ENCODE measurements at regions of chr4 and their contacts with region 1.

Region 1: DNA sequence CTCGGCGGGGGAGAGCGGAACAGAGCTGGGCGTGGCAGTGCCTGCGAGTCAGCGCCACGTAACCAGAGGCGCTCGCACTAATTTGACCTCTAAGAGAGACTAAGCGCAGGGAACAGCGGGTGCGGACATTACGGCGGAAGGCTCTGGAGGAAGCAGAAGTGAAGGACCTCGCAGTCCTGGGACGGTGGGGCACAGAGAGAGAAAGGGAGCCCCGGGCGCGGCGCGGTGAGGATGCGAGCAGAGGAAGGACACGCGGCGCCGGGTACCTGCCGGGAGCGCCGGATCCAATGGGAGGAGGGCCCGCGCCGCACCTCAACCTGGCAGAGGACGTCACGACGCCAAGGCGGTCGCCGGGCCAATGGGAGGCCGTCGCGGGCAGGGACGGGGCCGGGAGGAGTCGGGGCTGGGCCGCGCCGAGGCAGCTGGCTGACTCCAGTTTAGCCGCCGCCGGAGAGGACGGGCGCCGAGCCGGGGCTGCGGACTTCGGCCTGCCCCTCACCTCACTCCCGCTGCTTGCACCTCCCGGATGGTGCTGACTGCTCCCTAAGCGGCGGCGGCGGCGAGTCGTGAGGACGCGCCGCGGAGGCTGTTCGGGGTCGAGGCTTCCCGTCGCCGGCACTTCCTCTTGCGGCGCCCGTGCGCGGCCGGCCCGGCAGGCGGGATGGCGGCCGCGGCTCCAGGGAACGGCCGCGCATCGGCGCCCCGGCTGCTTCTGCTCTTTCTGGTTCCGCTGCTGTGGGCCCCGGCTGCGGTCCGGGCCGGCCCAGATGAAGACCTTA is at the start of gene TMEM165:
- DNase-seq: peak in 1 of 2 donors; percentile 94
- H3K4me3 ChIP-seq: peak within 1 kb of the TSS; percentile 86 to 95
- H3K27ac ChIP-seq: peak within 1 kb of the TSS; percentile 99
- H3K4me1 ChIP-seq: peaks cover 31% of the 10 kb centered on the region
- H3K27me3 ChIP-seq: no peaks in the 10 kb centered on the region
- CTCF ChIP-seq: no peak
- POLR2A ChIP-seq: peak in 1 of 2 donors; percentile 94
- total RNA-seq, gene TMEM165: 171 TPM

Region 2: DNA sequence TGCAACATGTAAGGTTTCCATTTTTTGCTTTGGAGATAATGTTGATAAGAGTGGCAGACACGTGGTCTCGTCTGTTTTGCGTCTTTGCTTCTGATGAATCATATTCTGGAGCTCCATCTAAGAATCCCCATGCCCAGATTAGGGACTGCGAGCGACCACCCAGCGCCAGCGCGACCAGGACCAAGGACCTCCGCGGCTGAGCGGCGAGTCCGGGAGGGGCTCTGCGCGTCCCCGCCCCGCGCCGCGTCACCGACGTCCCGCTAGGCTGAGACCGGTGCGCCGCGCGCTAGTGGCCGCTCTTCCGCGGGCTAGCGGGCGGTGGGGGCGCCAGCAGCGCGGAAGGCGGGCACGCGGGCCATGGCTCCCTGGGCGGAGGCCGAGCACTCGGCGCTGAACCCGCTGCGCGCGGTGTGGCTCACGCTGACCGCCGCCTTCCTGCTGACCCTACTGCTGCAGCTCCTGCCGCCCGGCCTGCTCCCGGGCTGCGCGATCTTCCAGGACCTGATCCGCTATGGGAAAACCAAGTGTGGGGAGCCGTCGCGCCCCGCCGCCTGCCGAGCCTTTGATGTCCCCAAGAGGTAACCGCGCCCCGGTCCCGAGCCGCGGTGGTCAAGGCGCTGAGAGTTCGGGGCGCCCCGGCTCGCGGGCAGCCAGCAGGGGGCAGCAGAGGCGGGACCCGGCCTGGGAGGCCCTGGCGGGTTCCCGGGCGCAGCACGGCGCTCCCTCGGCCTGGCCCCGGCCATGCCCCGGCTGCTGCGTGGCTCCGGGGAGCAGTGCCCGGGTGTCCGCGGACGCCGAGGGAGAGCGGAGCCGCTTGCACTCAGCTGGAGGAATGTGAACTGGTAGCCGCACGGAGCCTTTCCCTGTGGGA is 49.5 kb before region 1 on chr4 and contains the start of gene SRD5A3:
- intact Hi-C with region 1: loop called (anchors 10 kb)
- DNase-seq: no peak
- H3K4me3 ChIP-seq: peak within 1 kb of the TSS; percentile 68 to 76
- H3K27ac ChIP-seq: peak within 1 kb of the TSS; percentile 98
- H3K4me1 ChIP-seq: peaks cover 23% of the 10 kb centered on the region
- H3K27me3 ChIP-seq: no peaks in the 10 kb centered on the region
- CTCF ChIP-seq: peak; percentile 81 to 98 (median 94)
- POLR2A ChIP-seq: peak in 1 of 2 donors; percentile 13
- total RNA-seq, gene SRD5A3: 25.5 TPM

Region 3: GRCh38 chr4:55358668-55359067 is 37.0 kb before region 1 on chr4:
- intact Hi-C with region 1: loop called (anchors 2 kb)
- DNase-seq: peak in 1 of 2 donors; percentile 83
- H3K4me3 ChIP-seq: peak overlapping the region in 1 of 2 donors; percentile 11
- H3K27ac ChIP-seq: peak overlapping the region; percentile 71
- H3K4me1 ChIP-seq: peaks cover 37% of the 10 kb centered on the region
- H3K27me3 ChIP-seq: no peaks in the 10 kb centered on the region
- CTCF ChIP-seq: no peak
- POLR2A ChIP-seq: no peak

Region 4: GRCh38 chr4:55546756-55547465 is 151.2 kb after region 1 on chr4 and contains the start of gene CLOCK:
- intact Hi-C with region 1: loop called (anchors 2 kb)
- DNase-seq: peak in 1 of 2 donors; percentile 91
- H3K4me3 ChIP-seq: peak within 1 kb of the TSS; percentile 82 to 93
- H3K27ac ChIP-seq: peak within 1 kb of the TSS; percentile 99
- H3K4me1 ChIP-seq: peaks cover 22% of the 10 kb centered on the region
- H3K27me3 ChIP-seq: no peaks in the 10 kb centered on the region
- CTCF ChIP-seq: peak in 2 of 3 experiments; percentile 33 to 53
- POLR2A ChIP-seq: peak in 1 of 2 donors; percentile 57
- total RNA-seq, gene CLOCK: 34.4 TPM

Region 5: GRCh38 chr4:55673424-55673823 is 277.7 kb after region 1 on chr4:
- intact Hi-C with region 1: no loop called
- DNase-seq: no peak
- H3K4me3 ChIP-seq: no peak overlapping the region
- H3K27ac ChIP-seq: no peak overlapping the region
- H3K4me1 ChIP-seq: no peaks in the 10 kb centered on the region
- H3K27me3 ChIP-seq: no peaks in the 10 kb centered on the region
- CTCF ChIP-seq: no peak
- POLR2A ChIP-seq: no peak

Measured in vagina (tissue), 2 donors.